Activated naive CD4-positive, alpha-beta T cell treated with anti-CD3 and anti-CD28 coated beads, Interleukin-2, amount 10 ng/mL, durations not matched to agents 7 days and 5 days (primary cell): ENCODE measurements at regions of chr2 and their contacts with region 1.

Region 1: DNA sequence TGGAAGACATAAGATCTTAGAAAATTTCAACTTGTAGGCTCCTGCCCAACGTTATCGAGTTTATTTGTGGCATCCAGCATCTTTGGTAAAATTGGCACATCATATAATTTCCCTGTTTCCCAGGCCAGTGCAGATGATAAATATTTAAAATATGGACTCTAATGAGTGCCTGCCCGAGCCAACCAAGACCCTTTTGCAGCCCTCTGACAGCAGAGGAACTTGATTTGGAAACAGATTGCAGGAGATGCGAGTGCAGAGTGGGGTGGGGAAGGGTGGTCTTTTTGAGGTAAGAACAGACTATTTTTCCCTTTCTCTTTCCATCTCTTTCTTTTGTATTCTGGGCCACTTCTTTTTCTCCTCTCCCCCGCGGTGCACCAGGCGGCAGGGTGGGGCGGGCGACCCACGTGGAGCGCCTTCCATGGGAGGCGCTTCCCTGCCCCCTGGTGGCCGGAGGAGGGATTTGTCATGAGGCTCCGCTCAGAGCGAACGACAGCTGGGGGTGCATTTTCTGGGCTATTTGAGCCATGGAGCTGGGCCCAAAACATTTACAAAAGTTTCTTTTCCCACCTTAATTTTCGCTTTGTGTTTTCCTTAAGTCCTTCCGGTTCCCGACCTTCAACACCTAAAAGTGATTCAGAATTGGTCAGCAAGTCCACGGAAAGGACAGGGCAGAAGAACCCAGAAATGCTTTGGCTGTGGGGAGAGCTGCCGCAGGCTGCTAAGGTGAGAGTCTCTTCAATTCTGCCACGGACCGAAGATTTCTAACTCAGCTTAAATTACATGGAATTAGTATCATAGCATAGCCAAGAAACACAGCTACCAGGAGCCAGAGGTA is 32.7 kb downstream of the LPIN1 start:
- DNase-seq: peak; percentile 89
- H3K4me3 Mint-ChIP-seq: peak overlapping the region; percentile 46
- H3K27ac Mint-ChIP-seq: peak overlapping the region; percentile 68
- H3K4me1 Mint-ChIP-seq: peaks cover 52% of the 10 kb centered on the region
- H3K27me3 Mint-ChIP-seq: no peaks in the 10 kb centered on the region

Region 2: DNA sequence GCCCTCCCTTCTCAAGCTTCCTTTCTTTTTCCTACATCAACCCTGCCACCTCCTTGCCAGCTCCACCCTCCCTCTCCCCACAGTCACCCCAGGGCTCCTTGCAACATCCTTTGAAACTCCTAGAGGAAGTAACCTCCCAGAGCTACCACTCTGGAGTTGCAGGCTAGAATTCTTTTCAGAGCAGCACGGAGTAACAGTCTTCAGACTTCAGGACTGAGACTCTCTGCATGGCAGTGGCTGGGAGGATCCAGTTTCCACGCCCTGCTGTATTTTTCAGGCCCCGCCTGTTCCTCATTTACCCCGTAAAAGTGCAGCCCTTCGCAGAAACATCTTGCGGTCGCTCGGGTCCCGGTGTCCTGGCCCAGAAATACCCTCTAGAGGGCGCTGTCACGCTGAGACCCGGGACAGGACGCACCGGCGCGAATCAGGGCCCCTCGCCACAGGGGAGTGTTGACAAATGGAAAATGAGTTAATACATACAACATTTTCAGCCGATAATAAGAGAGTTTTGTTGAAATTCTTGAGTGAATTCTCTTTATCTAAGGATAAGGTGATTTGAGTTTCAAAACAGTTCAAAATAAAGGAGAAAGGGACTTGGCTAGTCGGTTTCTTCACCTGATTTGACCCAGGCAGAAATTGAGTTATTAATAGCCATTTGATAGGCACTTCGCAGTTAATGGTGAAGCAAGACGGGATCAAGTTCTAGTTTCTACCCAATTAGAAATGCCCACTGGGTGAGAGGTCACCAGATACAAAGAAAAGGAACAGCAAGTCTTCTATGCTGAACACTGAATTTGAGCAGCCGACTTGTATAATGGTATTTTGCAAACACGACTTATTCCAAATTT is 90.7 kb before region 1 on chr2:
- CTCF ChIA-PET with region 1: interaction called, 362 read pairs
- DNase-seq: peak; percentile 89
- H3K4me3 Mint-ChIP-seq: peak overlapping the region; percentile 16
- H3K27ac Mint-ChIP-seq: peak overlapping the region; percentile 40
- H3K4me1 Mint-ChIP-seq: peaks cover 24% of the 10 kb centered on the region
- H3K27me3 Mint-ChIP-seq: peaks cover 49% of the 10 kb centered on the region

Region 3: GRCh38 chr2:11753886-11754699 is 25.0 kb before region 1 on chr2:
- CTCF ChIA-PET with region 1: interaction called, 285 read pairs
- DNase-seq: peak; percentile 71
- H3K4me3 Mint-ChIP-seq: peak overlapping the region; percentile 64
- H3K27ac Mint-ChIP-seq: peak overlapping the region; percentile 96
- H3K4me1 Mint-ChIP-seq: peaks cover 95% of the 10 kb centered on the region
- H3K27me3 Mint-ChIP-seq: no peaks in the 10 kb centered on the region

Region 4: DNA sequence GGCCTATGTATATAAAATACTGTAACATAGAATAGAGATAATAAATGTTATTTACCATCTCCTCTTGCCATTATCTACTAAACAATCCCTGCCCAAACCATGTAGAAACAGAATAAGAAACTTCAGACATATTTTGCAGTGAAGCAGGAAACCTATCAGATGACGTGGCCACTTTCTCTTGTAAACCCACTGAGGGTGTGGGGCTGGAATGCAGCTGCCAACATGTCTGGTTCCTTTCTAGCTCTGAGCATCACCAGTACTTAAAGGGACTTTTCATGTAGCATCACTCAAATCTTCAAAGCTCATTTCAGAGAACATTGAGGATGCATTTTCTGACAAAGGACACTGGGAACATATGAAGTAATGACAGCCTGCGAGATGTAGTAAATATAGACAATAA is 219.1 kb after region 1 on chr2:
- CTCF ChIA-PET with region 1: no interaction called
- DNase-seq: peak; percentile 33
- H3K4me3 Mint-ChIP-seq: no peak overlapping the region
- H3K27ac Mint-ChIP-seq: no peak overlapping the region
- H3K4me1 Mint-ChIP-seq: peaks cover 8% of the 10 kb centered on the region
- H3K27me3 Mint-ChIP-seq: peaks cover 11% of the 10 kb centered on the region